Heart right ventricle (tissue), 16 donors: ENCODE measurements at regions of chr6 and their contacts with region 1.

Region 1: DNA sequence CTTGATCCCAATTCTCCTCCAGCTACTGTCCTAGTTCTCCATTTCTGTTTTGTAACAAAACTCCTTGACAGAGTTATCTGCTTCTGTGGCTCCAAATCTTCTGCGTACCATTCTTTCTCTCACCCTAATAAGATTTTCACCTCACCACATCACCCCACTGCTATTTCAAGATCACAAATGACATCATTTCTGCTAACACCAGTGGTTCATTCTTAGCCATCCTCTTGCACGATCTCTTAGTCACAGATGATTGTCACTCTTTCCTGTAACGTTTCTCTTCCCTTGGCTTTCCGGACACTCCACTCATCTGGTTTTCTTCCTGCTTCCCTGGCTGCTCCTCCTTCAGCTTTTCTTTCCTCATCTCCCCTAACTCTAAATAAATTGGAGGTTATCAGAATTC is 56.8 kb upstream of the FABP7 start:
- DNase-seq: no peak
- ATAC-seq: no peak
- H3K4me3 ChIP-seq: no peak overlapping the region
- H3K27ac ChIP-seq: no peak overlapping the region
- H3K4me1 ChIP-seq: no peaks in the 10 kb centered on the region
- H3K27me3 ChIP-seq: peaks cover 0 to 32% (median 19%) of the 10 kb centered on the region in 7 donors
- CTCF ChIP-seq: no peak

Region 2: GRCh38 chr6:122956376-122956775 is 233.6 kb after region 1 on chr6:
- intact Hi-C with region 1: loop called in 1 of 10 experiments (anchors 5 kb)
- DNase-seq: no peak
- ATAC-seq: no peak
- H3K4me3 ChIP-seq: no peak overlapping the region
- H3K27ac ChIP-seq: no peak overlapping the region
- H3K4me1 ChIP-seq: no peaks in the 10 kb centered on the region
- H3K27me3 ChIP-seq: no peaks in the 10 kb centered on the region
- CTCF ChIP-seq: no peak